ENCODE measurements at regions of chr12 and their contacts with region 1.

Region 1: DNA sequence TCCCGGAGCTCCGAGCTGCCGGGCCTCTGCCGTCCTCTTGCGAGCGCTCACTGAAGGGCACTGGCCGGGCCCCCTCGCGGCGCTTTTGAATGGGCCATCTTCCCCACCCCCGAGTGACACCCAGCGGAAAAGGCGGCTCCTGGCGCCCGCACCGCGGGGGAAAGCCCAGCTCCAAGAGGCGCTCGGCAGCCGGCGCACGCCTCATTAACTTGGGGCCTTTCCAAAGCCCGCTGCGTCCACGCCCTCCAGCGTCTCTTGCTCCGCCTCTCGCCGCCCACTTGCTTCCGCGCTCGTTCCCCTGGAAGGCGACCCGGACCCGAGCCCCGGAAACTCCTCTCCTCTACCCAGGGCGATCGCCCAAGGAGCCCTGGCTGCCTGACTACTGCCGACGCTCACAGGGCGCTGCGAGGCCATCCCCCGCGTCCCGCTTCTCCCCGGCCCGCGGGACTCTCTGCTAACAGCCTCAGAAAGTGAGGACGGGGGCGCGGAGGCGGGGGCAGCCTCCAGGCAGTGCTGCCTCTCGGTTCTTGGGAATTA is at the start of gene PHLDA1:
- DNase-seq: peak; percentile 96 to 98 (median 97)
- ATAC-seq: peak; percentile 92
- H3K4me3 ChIP-seq: peak within 1 kb of the TSS; percentile 57 to 68
- H3K27ac ChIP-seq: peak within 1 kb of the TSS; percentile 95
- H3K4me1 ChIP-seq: peaks cover 0 to 32% of the 10 kb centered on the region in 2 donors
- H3K27me3 ChIP-seq: peaks cover 0 to 36% of the 10 kb centered on the region in 2 donors
- CTCF ChIP-seq: peak; percentile 52 to 70
- polyA plus RNA-seq, gene PHLDA1: 40.3 to 59.3 (median 49.0) TPM

Region 2: GRCh38 chr12:75560167-75560566 is 471.4 kb before region 1 on chr12:
- intact Hi-C with region 1: loop called in 1 of 2 experiments (anchors 10 kb)
- DNase-seq: peak in 1 of 4 donors; percentile 60
- ATAC-seq: peak; percentile 98
- H3K4me3 ChIP-seq: no peak overlapping the region
- H3K27ac ChIP-seq: no peak overlapping the region
- H3K4me1 ChIP-seq: no peaks in the 10 kb centered on the region
- H3K27me3 ChIP-seq: no peaks in the 10 kb centered on the region
- CTCF ChIP-seq: peak in 1 of 2 donors; percentile 28

Region 3: DNA sequence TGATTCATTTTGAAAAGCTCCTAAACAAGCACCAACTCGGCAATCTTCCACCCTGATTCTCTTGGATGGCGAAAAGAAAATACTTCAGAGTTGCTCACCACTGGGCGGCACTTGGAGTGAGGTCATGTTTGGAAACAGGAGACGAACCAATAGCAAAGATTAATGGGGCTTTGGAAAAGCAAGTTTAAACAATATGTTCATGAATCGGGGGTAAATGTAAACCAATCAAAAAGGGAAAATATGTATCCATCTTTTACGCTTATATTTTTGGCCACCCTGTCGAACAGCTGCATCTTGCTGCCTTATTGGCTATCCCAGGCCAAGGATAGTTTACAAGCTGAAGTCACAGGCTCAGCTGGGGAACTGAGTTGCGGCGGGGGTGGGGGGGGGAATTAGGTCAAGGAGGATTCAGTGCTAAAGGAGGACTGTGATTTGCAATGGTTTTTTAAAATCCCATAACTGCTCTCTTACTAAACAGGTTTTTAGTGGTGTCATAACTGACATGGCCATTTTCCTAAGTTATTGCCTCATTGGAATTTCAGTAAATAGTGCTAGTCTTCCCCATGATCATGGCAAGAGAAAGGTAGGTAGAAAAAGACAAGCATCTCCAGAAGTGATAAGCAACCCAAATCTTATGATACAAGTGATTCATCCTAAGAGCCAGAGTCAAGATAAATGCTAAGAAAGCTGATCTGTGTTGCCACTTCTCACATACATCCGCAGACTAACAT is 210.6 kb before region 1 on chr12:
- intact Hi-C with region 1: loop called in 1 of 2 experiments (anchors 10 kb)
- DNase-seq: peak in 2 of 4 donors; percentile 70 to 84
- ATAC-seq: peak; percentile 52
- H3K4me3 ChIP-seq: no peak overlapping the region
- H3K27ac ChIP-seq: no peak overlapping the region
- H3K4me1 ChIP-seq: no peaks in the 10 kb centered on the region
- H3K27me3 ChIP-seq: no peaks in the 10 kb centered on the region
- CTCF ChIP-seq: no peak

Measured in left lung (tissue), 14 donors.